Activated B cell treated with CpG ODN at 0.5 μM for 24 hours (primary cell): ENCODE measurements at regions of chr11 and their contacts with region 1.

Region 1: GRCh38 chr11:3849297-3849874 is 6.1 kb upstream of the STIM1 start:
- DNase-seq: no peak
- ATAC-seq: peak; percentile 62
- H3K4me3 Mint-ChIP-seq: no peak overlapping the region
- H3K27ac Mint-ChIP-seq: no peak overlapping the region
- H3K4me1 Mint-ChIP-seq: peaks cover 22% of the 10 kb centered on the region
- H3K27me3 Mint-ChIP-seq: no peaks in the 10 kb centered on the region
- CTCF ChIP-seq: no peak

Region 2: DNA sequence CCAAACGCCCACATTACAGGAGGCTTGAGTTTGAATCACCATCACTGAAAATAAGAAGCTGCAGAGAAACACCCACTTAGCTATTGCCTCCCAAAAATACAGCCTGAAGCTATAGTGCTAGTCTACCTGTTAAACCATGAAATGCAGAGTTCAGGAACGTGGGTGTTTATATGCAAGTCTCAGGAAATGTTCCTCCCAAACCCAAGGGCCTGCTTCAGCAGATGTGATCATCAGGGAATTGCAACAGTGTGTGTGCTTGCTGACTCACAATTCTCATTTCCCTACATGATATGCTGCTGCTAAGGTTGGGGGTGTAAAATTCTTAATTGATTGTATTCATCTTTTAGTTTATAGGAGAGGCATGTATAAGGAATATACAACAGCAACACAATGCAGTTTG is 101.7 kb before region 1 on chr11:
- CTCF ChIA-PET with region 1: no interaction called
- POLR2A ChIA-PET with region 1: no interaction called
- intact Hi-C with region 1: no loop called
- DNase-seq: no peak
- ATAC-seq: no peak
- H3K4me3 Mint-ChIP-seq: no peak overlapping the region
- H3K27ac Mint-ChIP-seq: no peak overlapping the region
- H3K4me1 Mint-ChIP-seq: no peaks in the 10 kb centered on the region
- H3K27me3 Mint-ChIP-seq: no peaks in the 10 kb centered on the region
- CTCF ChIP-seq: no peak

Region 3: DNA sequence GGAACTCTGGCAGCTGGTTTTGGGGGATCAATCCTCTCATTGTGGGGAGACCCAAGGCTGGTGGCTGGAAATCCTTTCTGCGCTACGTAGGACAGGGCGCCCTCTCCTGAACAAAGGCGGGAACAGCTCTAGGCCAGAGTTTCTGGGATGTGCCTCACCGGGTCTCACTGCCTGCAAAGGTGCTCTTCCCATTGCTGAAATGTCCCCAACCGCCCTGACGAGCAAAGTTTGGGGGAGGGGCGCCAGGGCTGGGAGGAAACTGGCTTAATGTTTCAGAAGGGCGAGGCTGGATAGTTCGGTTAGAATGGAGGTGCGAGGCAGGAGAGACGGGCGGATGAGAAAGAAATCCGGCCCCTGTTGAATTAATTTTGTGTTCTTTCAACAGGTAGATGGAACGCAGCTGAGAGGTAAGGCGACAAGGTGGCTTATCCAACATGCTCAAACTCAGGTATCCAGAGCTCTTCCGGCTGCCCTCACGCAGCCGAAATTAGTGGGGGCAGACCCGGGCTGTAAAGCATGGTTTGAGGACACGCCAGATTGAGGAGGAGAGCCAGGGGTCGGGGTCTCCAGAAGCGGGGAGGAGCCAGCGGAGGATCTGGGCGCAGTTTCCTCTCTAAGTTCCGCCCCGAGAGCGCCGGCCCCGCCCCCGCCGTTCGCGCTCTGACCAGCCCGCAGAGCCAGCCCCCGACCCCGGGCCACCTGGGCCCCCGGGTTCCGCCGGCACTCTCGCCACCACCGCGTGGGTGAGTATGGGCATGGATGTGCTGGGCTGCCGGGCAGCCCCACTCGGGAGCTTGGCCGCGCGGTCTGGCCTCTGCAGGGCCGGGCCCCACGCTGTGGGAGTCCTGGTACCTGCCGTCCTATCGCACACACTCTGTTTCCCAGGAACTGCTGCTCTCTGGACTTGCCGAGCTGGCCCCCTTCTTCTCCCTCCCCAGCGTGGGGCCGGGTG is 41.2 kb before region 1 on chr11 and contains the start of gene PGAP2:
- CTCF ChIA-PET with region 1: interaction called, 12 read pairs
- POLR2A ChIA-PET with region 1: interaction called, 14 read pairs
- intact Hi-C with region 1: no loop called
- DNase-seq: peak; percentile 67
- ATAC-seq: peak; percentile 85
- H3K4me3 Mint-ChIP-seq: peak within 1 kb of the TSS; percentile 94
- H3K27ac Mint-ChIP-seq: peak within 1 kb of the TSS; percentile 68
- H3K4me1 Mint-ChIP-seq: peaks cover 13% of the 10 kb centered on the region
- H3K27me3 Mint-ChIP-seq: no peaks in the 10 kb centered on the region
- CTCF ChIP-seq: no peak
- total RNA-seq, gene PGAP2: 19.7 and 25.0 TPM in 2 replicates

Region 4: GRCh38 chr11:3905080-3905953 is 55.9 kb after region 1 on chr11:
- CTCF ChIA-PET with region 1: interaction called, 21 read pairs
- POLR2A ChIA-PET with region 1: interaction called, 19 read pairs
- intact Hi-C with region 1: no loop called
- DNase-seq: no peak
- ATAC-seq: peak; percentile 79
- H3K4me3 Mint-ChIP-seq: peak overlapping the region; percentile 17
- H3K27ac Mint-ChIP-seq: peak overlapping the region; percentile 8
- H3K4me1 Mint-ChIP-seq: peaks cover 84% of the 10 kb centered on the region
- H3K27me3 Mint-ChIP-seq: no peaks in the 10 kb centered on the region
- CTCF ChIP-seq: no peak

Region 5: DNA sequence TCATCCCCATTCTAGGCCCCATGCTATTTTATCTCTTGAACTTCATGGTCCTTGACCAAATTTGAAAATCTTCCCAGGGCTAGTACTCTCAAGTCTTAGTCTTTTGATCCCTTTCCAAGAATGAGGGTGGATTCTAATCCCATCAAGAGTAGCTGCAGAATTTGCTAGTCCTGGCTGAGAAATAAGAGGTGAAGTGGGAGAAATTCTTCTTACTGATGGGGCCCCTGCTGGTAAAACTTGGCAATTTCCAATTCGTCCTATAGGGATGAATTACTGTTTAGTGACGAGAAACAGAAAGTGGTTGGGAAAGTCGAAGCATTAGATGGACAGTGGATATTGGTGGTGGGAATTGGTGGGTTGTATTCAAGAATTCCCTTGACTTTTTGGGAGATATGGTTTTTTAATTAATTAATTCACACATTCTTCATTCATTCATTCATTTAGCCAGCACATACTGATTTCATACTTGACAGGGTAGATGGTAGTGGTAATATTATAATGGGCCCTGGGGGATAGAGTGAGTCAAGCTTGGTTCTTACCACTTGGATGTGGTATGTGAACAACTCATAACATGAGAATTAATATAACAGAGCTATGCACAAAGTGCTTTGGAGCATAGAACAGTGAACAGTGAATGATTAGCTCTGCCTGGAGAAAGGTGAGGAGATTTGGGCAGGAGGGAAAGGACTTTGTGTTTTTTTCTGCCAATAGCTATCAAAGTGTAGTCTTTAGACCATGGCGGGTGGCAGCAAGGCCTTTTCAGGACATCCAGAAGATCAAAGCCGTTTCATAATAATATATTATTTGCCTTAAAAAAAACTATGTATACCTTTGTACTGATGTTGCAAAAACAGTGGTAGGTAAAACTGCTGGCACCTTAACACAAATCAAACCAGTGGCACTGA is 109.9 kb after region 1 on chr11:
- CTCF ChIA-PET with region 1: interaction called, 34 read pairs
- POLR2A ChIA-PET with region 1: interaction called, 23 read pairs
- intact Hi-C with region 1: loop called (anchors 1 kb)
- DNase-seq: no peak
- ATAC-seq: peak; percentile 92
- H3K4me3 Mint-ChIP-seq: no peak overlapping the region
- H3K27ac Mint-ChIP-seq: peak overlapping the region; percentile 38
- H3K4me1 Mint-ChIP-seq: peaks cover 60% of the 10 kb centered on the region
- H3K27me3 Mint-ChIP-seq: no peaks in the 10 kb centered on the region
- CTCF ChIP-seq: no peak

Region 6: GRCh38 chr11:3984896-3985295 is 135.5 kb after region 1 on chr11:
- CTCF ChIA-PET with region 1: interaction called, 33 read pairs
- POLR2A ChIA-PET with region 1: interaction called, 15 read pairs
- intact Hi-C with region 1: loop called (anchors 1 kb)
- DNase-seq: no peak
- ATAC-seq: peak; percentile 73
- H3K4me3 Mint-ChIP-seq: no peak overlapping the region
- H3K27ac Mint-ChIP-seq: no peak overlapping the region
- H3K4me1 Mint-ChIP-seq: peaks cover 38% of the 10 kb centered on the region
- H3K27me3 Mint-ChIP-seq: no peaks in the 10 kb centered on the region
- CTCF ChIP-seq: no peak

Region 7: DNA sequence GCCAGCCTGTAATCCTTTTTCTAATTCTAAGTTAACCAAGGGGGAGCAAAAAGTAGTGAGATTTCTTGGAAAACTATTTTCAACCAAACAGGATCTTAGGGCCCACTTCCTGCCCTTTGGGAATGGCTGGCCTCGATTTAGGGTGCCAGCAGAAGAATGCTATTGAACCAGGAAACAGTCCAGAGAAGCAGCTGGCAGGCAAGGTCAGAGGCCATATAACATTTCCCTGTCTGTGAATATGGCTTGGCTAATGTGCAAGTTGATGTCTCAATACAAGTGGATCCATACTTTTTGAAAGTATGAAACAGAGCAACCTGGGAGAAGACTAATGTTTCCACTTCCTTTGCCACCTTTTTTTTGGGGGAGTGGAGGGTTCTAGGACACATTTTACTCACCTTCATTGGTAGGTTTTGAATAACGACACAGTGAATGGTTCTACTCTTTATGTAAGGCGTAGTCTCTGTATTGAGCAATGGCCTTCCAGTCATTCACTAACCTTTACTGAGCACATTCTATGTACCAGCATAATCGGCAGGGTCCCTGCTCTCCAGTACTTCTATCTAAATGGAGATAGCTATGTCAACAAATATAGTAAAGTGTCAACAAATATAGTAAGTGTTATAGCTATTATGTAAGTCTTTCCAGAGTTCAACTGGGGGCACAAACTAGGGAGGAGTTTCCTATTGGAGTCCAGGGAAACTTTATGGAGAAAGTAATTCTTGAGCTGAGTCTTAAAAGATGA is 211.0 kb after region 1 on chr11:
- CTCF ChIA-PET with region 1: interaction called, 526 read pairs
- POLR2A ChIA-PET with region 1: interaction called, 50 read pairs
- intact Hi-C with region 1: loop called (anchors 1 kb)
- DNase-seq: no peak
- ATAC-seq: no peak
- H3K4me3 Mint-ChIP-seq: no peak overlapping the region
- H3K27ac Mint-ChIP-seq: no peak overlapping the region
- H3K4me1 Mint-ChIP-seq: peaks cover 27% of the 10 kb centered on the region
- H3K27me3 Mint-ChIP-seq: no peaks in the 10 kb centered on the region
- CTCF ChIP-seq: no peak